H1 (cell line): ENCODE measurements at regions of chr21 and their contacts with region 1.

Region 1: DNA sequence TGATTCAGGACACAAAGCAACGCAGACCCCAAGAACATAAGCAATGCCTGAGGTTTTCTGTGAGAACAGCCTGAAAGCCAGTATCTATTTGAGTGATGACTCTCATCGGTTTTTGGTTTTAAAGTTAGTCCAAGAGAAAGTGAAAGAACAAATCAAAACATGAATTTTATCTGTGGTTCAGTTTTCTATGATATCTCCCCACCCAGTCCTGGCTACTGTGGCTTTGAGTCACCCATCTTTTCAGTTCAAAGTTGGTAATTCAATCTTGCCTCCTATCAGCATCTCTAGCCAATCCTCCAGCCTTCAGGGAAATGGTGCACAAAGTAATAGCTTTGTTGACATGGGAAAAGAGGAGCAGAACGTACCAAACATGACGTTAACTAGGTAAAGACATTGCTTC is 40.5 kb upstream of the KRTAP19-8 start:
- DNase-seq: no peak
- H3K4me3 ChIP-seq: no peak overlapping the region
- H3K27ac ChIP-seq: no peak overlapping the region
- H3K4me1 ChIP-seq: no peaks in the 10 kb centered on the region
- H3K27me3 ChIP-seq: no peaks in the 10 kb centered on the region
- CTCF ChIP-seq: no peak
- EP300 ChIP-seq: no peak
- POLR2A ChIP-seq: no peak
- RAD21 ChIP-seq: no peak

Region 2: DNA sequence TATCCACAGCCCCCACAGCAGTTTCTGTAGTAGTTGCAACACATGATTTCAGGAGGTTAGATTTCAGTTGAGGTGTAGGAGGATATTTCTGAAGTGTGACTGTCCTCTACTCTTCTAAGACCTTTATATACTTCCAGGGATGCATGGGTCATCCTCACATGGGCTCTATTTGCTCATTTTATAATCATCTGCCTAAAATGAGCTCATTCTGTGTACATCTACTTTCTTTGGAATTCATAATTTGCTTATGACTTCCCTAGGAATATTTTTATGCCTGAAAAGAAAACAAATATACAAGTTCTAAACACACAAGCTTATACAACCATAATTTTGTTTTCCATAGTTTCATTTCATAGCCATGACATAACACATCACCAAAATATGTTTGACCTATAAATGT is 331.6 kb before region 1 on chr21 and contains the start of gene KRTAP21-2:
- CTCF ChIA-PET with region 1: no interaction called
- POLR2A ChIA-PET with region 1: no interaction called
- DNase-seq: no peak
- H3K4me3 ChIP-seq: no peak within 1 kb of the TSS
- H3K27ac ChIP-seq: no peak within 1 kb of the TSS
- H3K4me1 ChIP-seq: no peaks in the 10 kb centered on the region
- H3K27me3 ChIP-seq: no peaks in the 10 kb centered on the region
- CTCF ChIP-seq: no peak
- EP300 ChIP-seq: no peak
- POLR2A ChIP-seq: no peak
- RAD21 ChIP-seq: no peak
- total RNA-seq, gene KRTAP21-2: not detected in 2 replicates

Region 3: GRCh38 chr21:30839304-30839703 is 239.5 kb before region 1 on chr21:
- CTCF ChIA-PET with region 1: interaction called, 14 read pairs
- POLR2A ChIA-PET with region 1: no interaction called
- DNase-seq: peak; percentile 29 to 63
- H3K4me3 ChIP-seq: no peak overlapping the region
- H3K27ac ChIP-seq: no peak overlapping the region
- H3K4me1 ChIP-seq: no peaks in the 10 kb centered on the region
- H3K27me3 ChIP-seq: no peaks in the 10 kb centered on the region
- CTCF ChIP-seq: peak; percentile 73 to 79 (median 77)
- EP300 ChIP-seq: no peak
- POLR2A ChIP-seq: no peak
- RAD21 ChIP-seq: peak; percentile 66 to 72

Region 4: DNA sequence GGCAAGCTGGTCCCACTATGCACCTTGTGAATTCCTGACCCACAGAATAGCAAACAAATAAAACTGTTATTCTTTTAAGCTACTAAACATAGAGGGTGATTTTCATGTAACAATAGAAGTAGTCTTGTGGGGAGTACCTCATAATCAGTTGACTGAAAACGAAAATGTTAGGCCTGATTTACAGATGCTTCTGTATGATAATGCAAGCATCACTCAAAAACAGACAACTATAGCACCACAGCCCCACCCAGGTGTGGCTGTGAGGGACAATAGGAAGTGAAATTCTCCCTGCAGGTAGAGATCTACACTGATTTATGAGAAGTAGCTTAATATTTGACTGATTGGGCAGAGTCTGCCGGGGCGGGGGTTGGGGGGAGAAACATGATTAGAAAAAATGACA is 14.0 kb before region 1 on chr21:
- CTCF ChIA-PET with region 1: interaction called, 10 read pairs
- POLR2A ChIA-PET with region 1: no interaction called
- DNase-seq: no peak
- H3K4me3 ChIP-seq: no peak overlapping the region
- H3K27ac ChIP-seq: no peak overlapping the region
- H3K4me1 ChIP-seq: no peaks in the 10 kb centered on the region
- H3K27me3 ChIP-seq: no peaks in the 10 kb centered on the region
- CTCF ChIP-seq: no peak
- EP300 ChIP-seq: no peak
- POLR2A ChIP-seq: no peak
- RAD21 ChIP-seq: no peak